ENCODE measurements at regions of chr2 and their contacts with region 1.

Region 1: GRCh38 chr2:40665485-40666232 is 213.8 kb upstream of the SLC8A1 start:
- DNase-seq: no peak
- H3K4me3 ChIP-seq: no peak overlapping the region
- H3K27ac ChIP-seq: no peak overlapping the region
- H3K4me1 ChIP-seq: no peaks in the 10 kb centered on the region
- H3K27me3 ChIP-seq: no peaks in the 10 kb centered on the region
- CTCF ChIP-seq: no peak
- EP300 ChIP-seq: no peak
- POLR2A ChIP-seq: no peak

Region 2: DNA sequence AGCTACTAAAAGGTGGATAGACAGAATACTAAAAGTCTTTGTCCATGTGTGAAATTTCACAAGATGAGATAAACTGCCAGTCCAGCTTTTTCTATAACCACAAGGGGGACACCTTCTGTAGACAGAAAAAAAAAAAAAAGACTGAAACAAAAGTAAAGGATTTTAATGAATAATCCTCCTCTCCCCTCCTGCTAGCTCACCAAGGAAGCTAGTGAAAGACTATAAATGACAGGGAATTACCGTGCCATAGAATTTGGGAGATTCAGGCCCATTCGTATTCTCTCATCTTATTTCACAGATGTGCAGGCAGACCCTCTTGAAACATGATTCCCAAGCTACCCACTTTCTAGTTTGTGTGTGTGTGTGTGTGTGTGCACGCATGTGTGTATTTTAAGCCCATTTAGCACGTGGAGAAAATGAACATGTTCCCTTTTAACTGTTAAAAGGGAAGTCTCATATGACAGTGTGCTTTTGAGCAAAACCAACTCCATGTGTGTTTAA is 177.5 kb before region 1 on chr2:
- intact Hi-C with region 1: no loop called
- DNase-seq: no peak
- H3K4me3 ChIP-seq: no peak overlapping the region
- H3K27ac ChIP-seq: no peak overlapping the region
- H3K4me1 ChIP-seq: no peaks in the 10 kb centered on the region
- H3K27me3 ChIP-seq: no peaks in the 10 kb centered on the region
- CTCF ChIP-seq: peak in 1 of 3 donors; percentile 24
- EP300 ChIP-seq: no peak
- POLR2A ChIP-seq: no peak

Region 3: DNA sequence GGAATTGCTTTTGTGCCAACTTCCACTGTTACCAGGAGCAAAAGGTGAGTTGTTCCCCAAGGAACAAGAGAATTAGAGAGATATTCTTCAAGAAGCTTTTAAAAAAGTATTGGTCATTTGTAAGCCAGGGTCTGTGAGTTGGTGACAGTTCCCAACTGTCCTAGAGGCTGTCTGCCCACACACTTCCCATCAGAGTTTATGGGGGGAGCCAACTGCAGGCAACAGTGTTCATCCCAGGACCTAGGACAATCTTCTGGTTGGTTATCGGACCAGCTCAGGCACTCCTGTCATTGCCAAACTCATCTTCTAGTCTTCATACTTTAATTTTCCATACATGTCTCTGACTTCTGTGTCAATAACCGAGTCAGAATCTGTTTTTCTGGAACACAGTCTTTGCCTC is 166.2 kb before region 1 on chr2:
- intact Hi-C with region 1: no loop called
- DNase-seq: no peak
- H3K4me3 ChIP-seq: no peak overlapping the region
- H3K27ac ChIP-seq: no peak overlapping the region
- H3K4me1 ChIP-seq: no peaks in the 10 kb centered on the region
- H3K27me3 ChIP-seq: no peaks in the 10 kb centered on the region
- CTCF ChIP-seq: no peak
- EP300 ChIP-seq: no peak
- POLR2A ChIP-seq: no peak

Region 4: GRCh38 chr2:40511661-40512213 is 153.9 kb before region 1 on chr2:
- intact Hi-C with region 1: no loop called
- DNase-seq: peak in 2 of 5 donors; percentile 9 to 48
- H3K4me3 ChIP-seq: peak overlapping the region; percentile 37
- H3K27ac ChIP-seq: no peak overlapping the region
- H3K4me1 ChIP-seq: peaks cover 5% of the 10 kb centered on the region
- H3K27me3 ChIP-seq: no peaks in the 10 kb centered on the region
- CTCF ChIP-seq: no peak
- EP300 ChIP-seq: no peak
- POLR2A ChIP-seq: no peak

Region 5: DNA sequence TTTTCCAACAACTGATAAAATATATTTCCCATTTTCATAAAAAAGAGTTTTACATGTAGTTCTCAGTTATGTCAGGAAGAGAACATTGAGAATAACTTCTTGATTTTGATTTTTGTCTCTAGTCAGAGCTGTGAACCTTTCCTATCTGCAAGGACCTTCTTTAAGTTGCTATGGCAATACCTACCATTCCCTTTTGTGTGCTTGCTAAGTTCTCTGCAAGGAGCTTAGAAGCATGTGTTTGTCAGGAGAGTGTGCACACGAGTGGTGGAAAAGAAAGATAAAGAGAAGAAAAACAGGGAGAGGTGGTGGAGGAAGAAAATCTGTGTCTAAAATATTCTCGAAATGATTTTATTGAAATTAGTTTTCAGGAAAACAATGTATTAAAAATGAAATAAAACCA is 73.4 kb before region 1 on chr2:
- intact Hi-C with region 1: no loop called
- DNase-seq: no peak
- H3K4me3 ChIP-seq: no peak overlapping the region
- H3K27ac ChIP-seq: no peak overlapping the region
- H3K4me1 ChIP-seq: no peaks in the 10 kb centered on the region
- H3K27me3 ChIP-seq: no peaks in the 10 kb centered on the region
- CTCF ChIP-seq: no peak
- EP300 ChIP-seq: no peak
- POLR2A ChIP-seq: no peak

Region 6: DNA sequence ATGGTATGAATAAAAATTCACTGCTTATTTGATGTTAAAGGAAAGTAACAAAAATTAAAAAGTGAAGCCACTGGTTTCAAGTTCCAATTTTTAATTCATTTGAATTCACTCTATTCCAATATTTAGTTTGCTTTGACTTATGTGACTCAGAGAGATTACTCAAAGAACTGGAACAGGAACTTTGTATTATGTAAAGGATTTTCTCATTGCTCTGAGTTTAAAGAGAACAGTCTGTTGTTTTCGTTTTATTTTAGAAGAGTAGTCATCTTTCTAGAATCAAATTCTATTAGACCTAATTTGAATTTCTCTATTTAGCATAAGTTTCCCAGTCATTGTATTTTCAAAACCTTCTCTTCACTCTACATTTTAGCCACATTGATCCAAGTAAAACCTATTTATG is 86.3 kb after region 1 on chr2:
- intact Hi-C with region 1: loop called in 1 of 4 experiments (anchors 2 kb)
- DNase-seq: no peak
- H3K4me3 ChIP-seq: no peak overlapping the region
- H3K27ac ChIP-seq: no peak overlapping the region
- H3K4me1 ChIP-seq: no peaks in the 10 kb centered on the region
- H3K27me3 ChIP-seq: no peaks in the 10 kb centered on the region
- CTCF ChIP-seq: no peak
- EP300 ChIP-seq: no peak
- POLR2A ChIP-seq: no peak